ENCODE measurements at regions of chr6 and their contacts with region 1.

Region 1: DNA sequence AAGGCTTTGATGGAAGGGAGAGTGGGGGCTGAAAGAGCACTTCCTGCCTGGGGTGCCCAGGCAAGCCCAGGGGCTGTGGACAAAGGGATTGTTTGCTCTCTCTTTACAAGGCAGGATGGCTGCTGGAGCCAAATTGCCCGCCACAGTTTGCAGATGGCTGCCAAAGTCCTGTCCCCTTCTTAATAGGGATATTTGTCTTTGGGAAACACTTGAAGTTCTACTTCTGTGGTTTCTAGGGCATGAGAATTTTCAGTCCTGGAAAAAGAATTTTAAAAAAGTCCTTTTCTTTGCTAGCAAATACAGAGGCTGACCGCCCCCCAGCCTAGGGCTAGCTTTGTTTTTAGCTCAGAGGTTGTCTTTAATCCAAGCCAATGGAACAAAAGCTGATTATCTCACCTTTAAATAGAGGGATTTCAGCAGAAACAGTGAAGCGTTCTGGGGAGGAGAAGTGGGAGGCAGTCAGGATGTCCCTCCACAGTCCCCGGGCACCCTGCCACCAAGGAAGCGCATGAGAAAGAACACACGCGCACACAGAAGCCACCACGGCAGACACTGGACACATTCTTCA is 736.7 kb downstream of the QKI start:
- DNase-seq: no peak
- H3K4me3 ChIP-seq: no peak overlapping the region
- CTCF ChIP-seq: no peak
- POLR2A ChIP-seq: no peak

Region 2: DNA sequence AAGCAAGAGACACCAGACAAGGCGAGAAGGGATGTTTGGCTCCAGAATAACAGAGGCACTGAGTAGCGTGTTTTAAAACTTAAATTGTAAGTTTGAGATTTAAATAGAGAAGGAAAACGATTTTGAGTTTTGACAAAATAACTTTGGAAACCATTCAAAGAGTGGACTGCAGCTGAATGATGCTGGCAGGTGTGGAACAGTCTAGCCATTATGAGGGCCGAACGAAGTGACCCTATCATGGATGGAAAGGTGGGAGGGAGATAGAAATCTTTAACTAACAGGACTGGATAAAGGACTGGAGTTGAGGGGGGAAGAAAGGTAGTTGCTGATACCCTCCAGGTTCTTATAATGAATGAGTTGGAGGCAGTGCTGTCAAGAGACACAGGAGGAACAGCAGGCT is 1175.1 kb before region 1 on chr6:
- intact Hi-C with region 1: loop called (anchors 5 kb)
- DNase-seq: no peak
- H3K4me3 ChIP-seq: no peak overlapping the region
- CTCF ChIP-seq: no peak
- POLR2A ChIP-seq: no peak

Region 3: DNA sequence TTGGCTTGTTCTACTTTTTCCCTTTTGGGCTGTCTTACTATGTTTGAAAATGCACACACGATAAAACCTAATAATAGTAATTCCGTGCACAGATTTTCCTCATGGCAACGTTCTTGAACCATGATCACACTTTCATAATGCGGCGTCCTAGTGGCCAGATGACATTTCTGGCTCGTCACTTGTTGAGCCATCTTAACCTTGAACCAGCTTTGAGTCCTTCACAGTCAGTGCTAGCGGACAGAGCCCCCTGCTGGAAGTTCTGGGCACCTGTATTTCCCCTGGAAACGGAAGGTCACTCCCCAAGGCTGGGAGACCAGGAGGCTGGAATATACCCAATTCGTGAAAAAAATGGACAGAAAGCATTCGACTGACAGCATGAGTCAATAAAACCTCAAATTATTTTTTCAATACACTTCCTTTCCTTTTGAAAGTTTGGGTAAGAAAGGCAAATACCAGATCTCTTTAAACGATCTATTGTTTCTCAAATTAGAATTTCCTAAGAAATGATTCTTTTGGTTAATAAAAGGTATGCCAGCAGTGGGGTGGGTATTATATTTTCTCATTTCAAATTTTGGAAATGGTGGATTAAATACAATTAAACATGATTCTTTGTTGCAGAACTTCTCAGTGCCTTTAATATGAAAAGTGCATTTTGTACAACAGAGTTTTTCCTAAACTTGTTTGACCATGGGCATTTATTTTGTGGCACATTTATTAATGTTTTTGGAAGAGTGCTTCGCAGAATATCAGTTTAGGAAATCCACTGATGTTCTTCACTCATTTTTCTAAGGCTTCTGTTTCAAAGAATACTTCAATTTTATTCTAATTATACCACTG is 194.5 kb before region 1 on chr6:
- intact Hi-C with region 1: no loop called
- DNase-seq: peak; percentile 82 to 96
- H3K4me3 ChIP-seq: no peak overlapping the region
- CTCF ChIP-seq: peak in 1 of 3 donors; percentile 69
- POLR2A ChIP-seq: no peak

Measured in lower leg skin (tissue), 4 donors.